Activated CD4-positive, alpha-beta T cell treated with anti-CD3 and anti-CD28 coated beads, Interleukin-2, amount 10 ng/mL, durations not matched to agents 24 days and 14 days (primary cell): ENCODE measurements at regions of chr6 and their contacts with region 1.

Region 1: DNA sequence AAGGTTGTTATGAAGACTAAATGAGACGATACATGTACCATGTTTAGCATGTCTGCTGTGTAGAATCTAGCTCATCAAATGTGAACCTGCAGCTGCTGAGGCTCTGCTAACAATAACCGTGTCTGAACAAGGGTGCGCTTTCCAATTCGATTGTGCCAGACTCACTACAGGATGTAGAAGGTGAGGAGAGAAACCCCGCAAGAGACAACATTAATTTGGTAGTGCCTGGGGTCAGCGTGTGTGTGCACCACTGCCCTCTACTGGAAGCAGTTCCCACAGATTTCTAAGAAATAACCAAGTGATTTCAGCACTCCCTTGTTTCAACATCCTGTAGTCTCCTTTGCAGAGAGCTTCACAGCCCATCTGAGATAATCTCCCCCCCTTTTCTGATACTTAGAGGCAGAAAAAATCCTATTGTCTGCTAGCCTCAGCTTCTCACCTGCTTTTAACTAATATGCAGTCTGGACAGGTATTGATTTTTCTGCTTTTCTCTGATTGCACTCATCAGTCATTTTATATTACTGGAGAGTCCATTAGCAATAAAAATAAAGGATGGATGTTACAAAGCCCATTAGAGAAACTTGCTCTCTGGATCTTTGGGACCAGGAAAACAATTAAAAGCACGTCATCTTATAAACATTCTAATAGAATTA is 96.7 kb upstream of the BACH2 start:
- DNase-seq: peak; percentile 93
- H3K4me3 Mint-ChIP-seq: no peak overlapping the region
- H3K27ac Mint-ChIP-seq: peak overlapping the region; percentile 35
- H3K4me1 Mint-ChIP-seq: peaks cover 60% of the 10 kb centered on the region
- H3K27me3 Mint-ChIP-seq: no peaks in the 10 kb centered on the region

Region 2: DNA sequence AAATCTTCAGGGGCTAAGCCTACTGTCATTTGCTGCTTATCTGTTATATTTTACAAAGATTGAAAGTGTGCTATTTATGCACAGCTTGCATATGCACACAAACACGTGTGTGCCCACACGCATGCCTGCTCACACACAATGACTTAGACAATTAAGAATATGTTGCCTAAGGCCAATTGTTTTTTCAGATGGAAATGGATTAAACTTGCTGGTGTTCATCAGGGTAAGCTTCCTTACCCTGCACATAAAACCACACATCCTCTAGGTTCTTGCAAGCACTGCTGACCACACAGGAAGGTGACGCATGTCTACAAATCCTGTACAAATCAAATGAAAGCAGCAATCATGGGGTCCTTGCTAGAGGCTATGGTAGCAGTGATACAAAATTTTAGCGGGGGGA is 440.7 kb before region 1 on chr6:
- intact Hi-C with region 1: loop called (anchors 1 kb)
- DNase-seq: peak; percentile 89
- H3K4me3 Mint-ChIP-seq: peak overlapping the region; percentile 69
- H3K27ac Mint-ChIP-seq: peak overlapping the region; percentile 84
- H3K4me1 Mint-ChIP-seq: peaks cover 63% of the 10 kb centered on the region
- H3K27me3 Mint-ChIP-seq: no peaks in the 10 kb centered on the region

Region 3: DNA sequence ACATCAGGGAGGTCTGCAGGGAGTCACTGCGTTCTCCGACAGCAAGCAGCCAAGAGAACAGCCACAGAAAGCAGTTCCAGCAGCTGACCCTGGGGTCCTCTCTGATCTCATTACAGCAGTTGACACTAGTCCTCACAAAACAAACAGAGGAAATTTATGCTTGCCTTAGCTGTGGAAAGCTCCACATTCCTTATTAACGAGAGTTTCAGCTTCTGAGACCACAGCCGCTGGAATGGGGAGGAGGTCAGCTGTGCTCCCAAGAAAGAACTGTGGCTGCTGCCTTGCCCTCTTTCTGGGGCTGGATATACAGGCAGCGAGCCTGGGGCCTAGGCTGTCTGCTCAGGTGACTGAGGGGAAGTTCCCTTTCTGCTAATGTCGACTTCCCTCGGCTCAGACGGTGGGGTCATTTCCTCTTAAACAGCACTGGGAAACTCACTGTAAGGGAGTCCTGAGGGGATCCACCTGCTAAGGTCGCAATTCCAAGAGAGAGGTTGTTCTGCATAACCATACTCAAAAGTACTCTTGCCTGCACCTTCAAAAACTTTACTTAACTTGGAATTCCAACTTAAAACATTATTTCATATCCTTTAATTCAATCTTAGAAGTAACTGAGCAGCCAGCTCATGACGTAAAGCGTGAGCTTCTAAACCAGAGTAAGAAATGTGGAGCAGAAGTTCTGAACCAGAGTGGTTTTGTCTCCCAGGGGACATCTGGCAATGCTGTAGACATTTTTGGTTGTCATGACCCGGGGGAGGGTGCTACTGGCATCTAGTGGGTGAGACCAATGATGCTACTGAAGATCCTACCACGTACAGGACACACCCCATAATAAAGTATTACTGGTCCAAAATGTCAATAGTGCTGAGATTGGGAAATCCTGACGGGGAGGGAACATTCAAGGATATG is 177.0 kb before region 1 on chr6:
- intact Hi-C with region 1: loop called (anchors 10 kb)
- DNase-seq: peak; percentile 79
- H3K4me3 Mint-ChIP-seq: peak overlapping the region; percentile 48
- H3K27ac Mint-ChIP-seq: no peak overlapping the region
- H3K4me1 Mint-ChIP-seq: peaks cover 40% of the 10 kb centered on the region
- H3K27me3 Mint-ChIP-seq: no peaks in the 10 kb centered on the region

Region 4: GRCh38 chr6:90406142-90406794 is 12.9 kb after region 1 on chr6:
- intact Hi-C with region 1: loop called (anchors 1 kb)
- DNase-seq: peak; percentile 77
- H3K4me3 Mint-ChIP-seq: peak overlapping the region; percentile 12
- H3K27ac Mint-ChIP-seq: peak overlapping the region; percentile 82
- H3K4me1 Mint-ChIP-seq: peaks cover 67% of the 10 kb centered on the region
- H3K27me3 Mint-ChIP-seq: no peaks in the 10 kb centered on the region

Region 5: DNA sequence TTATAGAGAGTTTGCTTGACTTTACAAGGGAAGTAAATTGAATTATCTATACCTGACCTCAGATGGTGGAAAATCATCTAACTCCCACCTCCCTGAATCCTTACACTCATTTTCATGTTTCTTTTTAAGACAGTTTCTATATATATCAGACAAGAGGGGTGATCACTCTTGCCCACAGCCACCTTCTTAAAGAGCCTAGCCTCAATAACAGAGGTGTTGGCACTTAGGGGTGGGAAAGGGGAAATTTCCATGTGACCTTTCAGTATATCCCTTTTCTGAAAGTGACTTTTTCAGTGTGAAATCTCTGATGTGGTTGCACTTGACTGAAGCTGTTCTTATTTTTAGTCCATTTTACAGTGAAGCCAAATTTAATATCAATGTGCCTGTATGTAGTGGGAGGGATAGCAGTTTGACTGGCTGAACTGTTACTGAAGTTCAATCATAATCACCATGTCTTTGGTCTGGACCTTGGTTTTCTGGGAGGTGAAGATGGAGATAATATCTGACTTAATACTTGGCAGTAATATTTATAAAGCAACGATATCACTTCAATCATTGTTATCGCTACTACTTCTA is 52.3 kb after region 1 on chr6:
- intact Hi-C with region 1: loop called (anchors 1 kb)
- DNase-seq: peak; percentile 55
- H3K4me3 Mint-ChIP-seq: peak overlapping the region; percentile 22
- H3K27ac Mint-ChIP-seq: peak overlapping the region; percentile 86
- H3K4me1 Mint-ChIP-seq: peaks cover 41% of the 10 kb centered on the region
- H3K27me3 Mint-ChIP-seq: no peaks in the 10 kb centered on the region

Region 6: DNA sequence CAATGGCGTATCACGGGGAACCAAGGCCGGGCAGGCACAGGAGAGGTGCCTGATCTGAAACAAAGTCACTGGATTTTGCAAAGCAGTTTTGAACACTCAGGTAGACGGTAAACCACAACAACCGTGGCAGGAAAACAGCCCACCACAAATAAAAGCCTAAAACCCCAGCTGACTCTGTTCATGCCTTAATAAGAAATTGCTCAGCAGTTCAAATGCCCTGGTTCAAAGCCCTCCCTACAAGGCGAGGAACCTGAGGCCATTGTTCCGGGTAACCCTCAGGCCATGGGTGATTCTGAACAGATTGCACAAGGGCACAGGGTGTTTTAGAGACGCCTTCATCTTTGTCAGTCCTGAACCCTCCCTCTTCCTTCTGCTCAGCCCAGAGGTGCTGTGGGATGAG is 79.4 kb after region 1 on chr6:
- intact Hi-C with region 1: loop called (anchors 1 kb)
- DNase-seq: peak; percentile 85
- H3K4me3 Mint-ChIP-seq: peak overlapping the region; percentile 69
- H3K27ac Mint-ChIP-seq: peak overlapping the region; percentile 92
- H3K4me1 Mint-ChIP-seq: peaks cover 91% of the 10 kb centered on the region
- H3K27me3 Mint-ChIP-seq: no peaks in the 10 kb centered on the region